ENCODE measurements at regions of chr7 and their contacts with region 1.

Region 1: GRCh38 chr7:33109005-33109757 is at the start of gene RP9:
- DNase-seq: no peak
- H3K4me3 ChIP-seq: peak within 1 kb of the TSS; percentile 60
- H3K27me3 ChIP-seq: 0 out of 2 replicates have a peak, but pooled peaks cover 2% of the 10 kb centered on the region
- CTCF ChIP-seq: peak; percentile 13; the same call in 1 of the 2 replicates
- polyA plus RNA-seq, gene RP9: 16.2 and 18.6 TPM in 2 replicates

Region 2: DNA sequence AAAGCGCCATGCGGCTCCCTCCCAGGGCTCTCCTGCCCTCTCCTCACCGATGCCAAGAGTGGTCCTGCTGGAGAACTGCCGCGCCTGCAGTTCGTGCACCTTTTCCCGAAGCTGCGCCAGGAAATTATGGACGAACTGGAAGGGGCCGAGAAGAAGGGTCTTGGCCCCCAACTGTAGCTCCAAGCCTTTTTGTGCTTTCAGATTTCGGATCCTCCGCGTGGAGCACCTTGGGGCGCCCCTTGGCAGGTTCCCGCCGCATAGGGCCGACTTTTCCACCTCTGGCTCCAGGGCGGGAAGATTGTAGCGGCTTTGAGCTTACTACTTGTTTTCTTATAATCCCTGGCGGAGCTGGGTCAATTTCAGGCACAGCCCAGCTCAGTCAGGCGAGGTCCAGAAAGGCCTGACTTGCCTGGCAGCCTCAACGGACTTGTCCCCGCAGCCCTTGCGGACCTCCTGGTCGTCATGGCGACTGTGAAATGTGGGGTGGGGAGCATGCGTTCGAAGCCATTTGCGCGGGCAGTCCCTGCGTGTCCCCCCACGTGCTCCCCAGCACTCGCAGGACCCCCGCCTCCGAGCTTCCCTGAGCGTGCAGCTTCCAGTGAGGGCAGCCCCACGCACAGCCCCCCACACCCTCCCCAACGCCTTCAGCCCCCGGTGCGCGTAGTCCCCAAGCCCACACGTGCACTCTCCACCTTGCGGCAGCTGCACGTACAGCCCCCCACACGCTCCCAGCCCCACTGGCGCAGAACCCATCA is 347.6 kb before region 1 on chr7:
- CTCF ChIA-PET with region 1: interaction called, 39 read pairs
- POLR2A ChIA-PET with region 1: no interaction called
- DNase-seq: no peak
- H3K4me3 ChIP-seq: no peak overlapping the region
- H3K27me3 ChIP-seq: no peaks in the 10 kb centered on the region
- CTCF ChIP-seq: no peak

Region 3: GRCh38 chr7:32803406-32804141 is 305.6 kb before region 1 on chr7:
- CTCF ChIA-PET with region 1: interaction called, 49 read pairs
- POLR2A ChIA-PET with region 1: no interaction called
- DNase-seq: no peak
- H3K4me3 ChIP-seq: no peak overlapping the region
- H3K27me3 ChIP-seq: no peaks in the 10 kb centered on the region
- CTCF ChIP-seq: no peak

Region 4: GRCh38 chr7:32891800-32892520 is 217.2 kb before region 1 on chr7:
- CTCF ChIA-PET with region 1: interaction called, 11 read pairs
- POLR2A ChIA-PET with region 1: no interaction called
- DNase-seq: peak; percentile 69
- H3K4me3 ChIP-seq: peak overlapping the region; percentile 67
- H3K27me3 ChIP-seq: no peaks in the 10 kb centered on the region
- CTCF ChIP-seq: no peak

Region 5: GRCh38 chr7:33062782-33063443 is 46.3 kb before region 1 on chr7:
- CTCF ChIA-PET with region 1: interaction called, 19 read pairs
- POLR2A ChIA-PET with region 1: interaction called, 3 read pairs
- DNase-seq: peak; percentile 69
- H3K4me3 ChIP-seq: peak overlapping the region; percentile 58
- H3K27me3 ChIP-seq: no peaks in the 10 kb centered on the region
- CTCF ChIP-seq: 0 out of 2 replicates have a peak, but pooled peaks have one; percentile 3

Region 6: GRCh38 chr7:33072471-33072870 is 36.7 kb before region 1 on chr7:
- CTCF ChIA-PET with region 1: interaction called, 14 read pairs
- POLR2A ChIA-PET with region 1: no interaction called
- DNase-seq: peak; percentile 57
- H3K4me3 ChIP-seq: no peak overlapping the region
- H3K27me3 ChIP-seq: no peaks in the 10 kb centered on the region
- CTCF ChIP-seq: no peak

Region 7: DNA sequence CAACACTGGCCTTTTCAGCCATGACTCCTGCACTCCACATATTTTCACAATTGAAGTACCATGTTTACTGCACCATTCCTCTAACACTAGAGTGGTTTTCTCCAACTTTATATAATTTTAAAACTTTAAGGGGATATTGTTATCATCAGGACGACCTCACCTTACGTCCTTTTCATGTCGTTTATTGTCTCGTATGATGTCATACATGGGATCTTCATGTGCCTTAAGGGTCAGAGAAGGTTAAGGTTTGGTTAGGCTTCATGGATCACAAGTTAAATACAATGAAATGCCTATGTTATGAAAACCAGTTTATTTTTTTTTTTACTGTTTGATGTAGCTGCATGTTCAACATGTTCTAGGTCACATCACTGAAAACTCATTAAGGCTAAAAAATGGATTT is 12.8 kb before region 1 on chr7:
- CTCF ChIA-PET with region 1: interaction called, 14 read pairs
- POLR2A ChIA-PET with region 1: no interaction called
- DNase-seq: no peak
- H3K4me3 ChIP-seq: no peak overlapping the region
- H3K27me3 ChIP-seq: no peaks in the 10 kb centered on the region
- CTCF ChIP-seq: no peak

Region 8: DNA sequence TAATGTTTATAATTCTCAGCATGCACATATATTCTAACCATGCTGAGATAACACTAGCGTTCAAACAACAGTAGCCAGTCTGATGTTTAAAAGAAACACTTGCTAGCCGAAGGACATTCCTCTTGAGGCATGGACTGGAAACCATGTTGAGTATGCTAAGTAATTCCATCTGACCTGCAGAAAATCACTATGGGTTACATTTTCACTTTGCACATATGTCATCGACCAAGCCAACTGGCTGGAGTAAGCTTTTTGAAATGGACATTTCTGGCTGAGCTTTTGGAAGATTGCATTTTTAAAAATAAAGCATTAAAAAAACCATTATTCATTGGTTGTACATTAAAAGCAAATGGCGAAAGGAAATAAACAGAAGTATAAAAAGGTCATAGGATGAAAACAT is 108.4 kb after region 1 on chr7:
- CTCF ChIA-PET with region 1: no interaction called
- POLR2A ChIA-PET with region 1: no interaction called
- DNase-seq: no peak
- H3K4me3 ChIP-seq: no peak overlapping the region
- H3K27me3 ChIP-seq: no peaks in the 10 kb centered on the region
- CTCF ChIP-seq: no peak

Measured in BJ (cell line).